Prostate gland (tissue), 2 donors: ENCODE measurements at regions of chr7 and their contacts with region 1.

Region 1: DNA sequence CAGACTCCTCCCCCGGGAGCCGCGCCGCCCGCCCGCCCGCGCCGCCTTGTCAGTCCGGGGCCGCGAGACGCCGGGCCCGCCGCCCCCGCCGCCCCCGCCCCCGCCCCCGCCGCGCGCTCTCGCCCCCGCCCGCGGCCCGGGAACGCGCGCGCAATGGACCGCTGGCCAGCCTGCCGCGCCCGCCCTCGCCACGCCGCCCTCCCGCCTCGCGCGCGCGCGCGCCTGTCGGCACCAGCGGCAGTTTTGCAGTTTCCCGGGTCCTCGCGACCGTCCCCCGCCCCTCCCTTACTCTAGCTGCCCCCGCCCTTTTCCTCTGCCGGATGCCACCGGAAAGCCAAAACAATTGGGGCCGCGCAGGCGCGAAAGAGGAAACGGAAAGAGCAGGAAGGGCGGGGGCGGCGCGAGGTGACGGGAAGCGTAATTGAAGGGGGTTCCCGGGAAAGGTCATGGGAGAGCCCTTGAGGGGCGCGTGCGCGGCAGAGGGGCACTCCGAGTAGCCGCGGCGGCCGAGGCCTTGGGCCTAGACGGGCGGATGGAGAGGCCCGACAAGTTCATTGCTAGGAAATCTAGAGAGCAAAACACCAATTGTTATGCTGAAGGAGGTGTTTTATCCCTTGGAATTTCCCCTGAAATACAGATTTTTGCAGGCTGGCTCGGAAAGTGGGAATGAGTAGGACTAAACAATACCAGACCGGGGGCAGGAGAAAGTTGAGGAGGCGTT is 400 bp upstream of the KBTBD2 start:
- DNase-seq: peak; percentile 96
- H3K4me3 ChIP-seq: peak overlapping the region; percentile 94 to 99
- H3K27ac ChIP-seq: peak overlapping the region; percentile 99
- H3K4me1 ChIP-seq: peaks cover 5% of the 10 kb centered on the region
- H3K27me3 ChIP-seq: no peaks in the 10 kb centered on the region
- CTCF ChIP-seq: no peak
- POLR2A ChIP-seq: peak; percentile 70

Region 2: GRCh38 chr7:32427769-32428291 is 464.1 kb before region 1 on chr7:
- intact Hi-C with region 1: no loop called
- DNase-seq: peak; percentile 22
- H3K4me3 ChIP-seq: no peak overlapping the region
- H3K27ac ChIP-seq: no peak overlapping the region
- H3K4me1 ChIP-seq: no peaks in the 10 kb centered on the region
- H3K27me3 ChIP-seq: peaks cover 7% of the 10 kb centered on the region
- CTCF ChIP-seq: no peak
- POLR2A ChIP-seq: no peak

Region 3: GRCh38 chr7:32942786-32943653 is 51.1 kb after region 1 on chr7:
- intact Hi-C with region 1: loop called (anchors 5 kb)
- DNase-seq: peak; percentile 67
- H3K4me3 ChIP-seq: peak overlapping the region; percentile 72 to 82
- H3K27ac ChIP-seq: peak overlapping the region; percentile 86 to 95
- H3K4me1 ChIP-seq: no peaks in the 10 kb centered on the region
- H3K27me3 ChIP-seq: no peaks in the 10 kb centered on the region
- CTCF ChIP-seq: peak; percentile 58 to 76 (median 64)
- POLR2A ChIP-seq: peak; percentile 47

Region 4: GRCh38 chr7:32957326-32958045 is 65.5 kb after region 1 on chr7 and contains the start of gene FKBP9:
- intact Hi-C with region 1: loop called (anchors 5 kb)
- DNase-seq: peak; percentile 85
- H3K4me3 ChIP-seq: peak within 1 kb of the TSS; percentile 86 to 92
- H3K27ac ChIP-seq: peak within 1 kb of the TSS; percentile 84 to 85
- H3K4me1 ChIP-seq: no peaks in the 10 kb centered on the region
- H3K27me3 ChIP-seq: no peaks in the 10 kb centered on the region
- CTCF ChIP-seq: no peak
- POLR2A ChIP-seq: peak; percentile 66
- total RNA-seq, gene FKBP9: 115 to 137 TPM

Region 5: DNA sequence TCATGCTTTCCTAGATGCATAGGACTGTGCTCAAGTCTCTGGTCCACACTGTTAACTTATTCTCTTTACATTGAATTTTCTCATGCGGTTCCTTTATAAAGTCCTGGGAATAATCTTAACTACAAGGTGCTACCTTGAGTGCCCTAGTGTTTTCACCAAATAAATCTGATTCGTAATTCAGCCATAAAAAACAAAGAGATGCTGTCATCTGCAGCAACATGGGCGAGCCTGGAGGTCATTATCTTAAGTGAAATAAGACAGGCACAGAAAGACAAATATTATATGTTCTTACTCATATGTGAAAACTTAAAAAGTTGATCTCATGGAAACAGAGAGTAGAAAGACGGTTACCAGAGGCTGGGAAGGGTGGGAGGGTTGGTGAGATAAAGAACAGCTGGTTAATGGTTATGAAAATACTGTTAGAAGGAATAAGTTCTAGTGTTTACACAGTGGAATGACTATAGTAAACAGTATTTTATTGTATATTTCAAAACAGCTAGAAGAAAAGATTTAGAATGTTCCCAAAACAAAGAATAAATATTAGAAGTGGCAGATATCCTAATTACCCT is 132.3 kb after region 1 on chr7:
- intact Hi-C with region 1: no loop called
- DNase-seq: no peak
- H3K4me3 ChIP-seq: no peak overlapping the region
- H3K27ac ChIP-seq: no peak overlapping the region
- H3K4me1 ChIP-seq: no peaks in the 10 kb centered on the region
- H3K27me3 ChIP-seq: no peaks in the 10 kb centered on the region
- CTCF ChIP-seq: no peak
- POLR2A ChIP-seq: no peak